Heart right ventricle (tissue), 16 donors: ENCODE measurements at regions of chr12 and their contacts with region 1.

Region 1: DNA sequence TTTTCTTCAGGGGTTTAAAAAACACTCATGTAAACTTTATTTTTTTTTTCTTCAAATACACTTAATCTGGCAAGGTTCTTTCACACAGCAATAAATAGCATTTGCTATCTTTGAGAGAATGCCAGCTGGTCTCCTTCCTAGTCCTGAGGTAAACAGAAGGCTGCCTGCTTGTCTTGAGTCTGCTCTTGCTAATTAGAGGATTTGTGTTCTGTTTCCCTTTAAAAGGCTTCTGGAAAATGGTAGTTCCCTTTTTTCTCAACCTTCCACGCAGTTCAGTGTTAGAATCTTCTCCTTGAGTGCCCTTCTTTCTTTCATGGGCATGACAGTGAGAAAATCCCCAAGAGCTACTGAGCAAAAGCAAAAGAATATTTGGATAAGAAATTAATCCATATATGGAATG is 92.3 kb upstream of the DCN start:
- DNase-seq: peak in 1 of 2 donors; percentile 41
- ATAC-seq: peak in 4 of 8 donors; percentile 43 to 58 (median 46)
- H3K4me3 ChIP-seq: no peak overlapping the region
- H3K27ac ChIP-seq: peak overlapping the region; percentile 25 to 85 (median 66)
- H3K4me1 ChIP-seq: peaks cover 0 to 42% (median 14%) of the 10 kb centered on the region in 9 donors
- H3K27me3 ChIP-seq: no peaks in the 10 kb centered on the region
- CTCF ChIP-seq: no peak

Region 2: DNA sequence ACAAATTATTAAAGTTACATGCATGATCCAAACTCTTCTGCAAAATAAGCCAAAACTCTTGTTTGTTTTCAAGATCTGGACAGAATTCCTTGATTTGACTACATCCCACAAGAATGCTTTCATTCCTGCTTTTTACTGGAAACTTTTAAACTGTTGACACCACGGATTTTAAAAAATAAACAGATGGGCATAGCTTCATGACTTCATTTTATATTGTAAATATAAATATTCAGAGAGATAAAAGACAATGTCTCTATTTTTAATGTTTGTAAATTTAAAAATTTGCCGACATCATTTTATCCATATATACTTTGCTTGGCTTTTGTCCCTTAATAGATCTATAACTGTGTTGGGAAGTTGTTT is 42.0 kb after region 1 on chr12:
- intact Hi-C with region 1: loop called in 1 of 10 experiments (anchors 5 kb)
- DNase-seq: no peak
- ATAC-seq: peak in 3 of 8 donors; percentile 14 to 42 (median 39)
- H3K4me3 ChIP-seq: no peak overlapping the region
- H3K27ac ChIP-seq: peak overlapping the region in 6 of 10 donors; percentile 18 to 67 (median 38)
- H3K4me1 ChIP-seq: peaks cover 0 to 10% (median 0%) of the 10 kb centered on the region in 9 donors
- H3K27me3 ChIP-seq: no peaks in the 10 kb centered on the region
- CTCF ChIP-seq: no peak

Region 3: DNA sequence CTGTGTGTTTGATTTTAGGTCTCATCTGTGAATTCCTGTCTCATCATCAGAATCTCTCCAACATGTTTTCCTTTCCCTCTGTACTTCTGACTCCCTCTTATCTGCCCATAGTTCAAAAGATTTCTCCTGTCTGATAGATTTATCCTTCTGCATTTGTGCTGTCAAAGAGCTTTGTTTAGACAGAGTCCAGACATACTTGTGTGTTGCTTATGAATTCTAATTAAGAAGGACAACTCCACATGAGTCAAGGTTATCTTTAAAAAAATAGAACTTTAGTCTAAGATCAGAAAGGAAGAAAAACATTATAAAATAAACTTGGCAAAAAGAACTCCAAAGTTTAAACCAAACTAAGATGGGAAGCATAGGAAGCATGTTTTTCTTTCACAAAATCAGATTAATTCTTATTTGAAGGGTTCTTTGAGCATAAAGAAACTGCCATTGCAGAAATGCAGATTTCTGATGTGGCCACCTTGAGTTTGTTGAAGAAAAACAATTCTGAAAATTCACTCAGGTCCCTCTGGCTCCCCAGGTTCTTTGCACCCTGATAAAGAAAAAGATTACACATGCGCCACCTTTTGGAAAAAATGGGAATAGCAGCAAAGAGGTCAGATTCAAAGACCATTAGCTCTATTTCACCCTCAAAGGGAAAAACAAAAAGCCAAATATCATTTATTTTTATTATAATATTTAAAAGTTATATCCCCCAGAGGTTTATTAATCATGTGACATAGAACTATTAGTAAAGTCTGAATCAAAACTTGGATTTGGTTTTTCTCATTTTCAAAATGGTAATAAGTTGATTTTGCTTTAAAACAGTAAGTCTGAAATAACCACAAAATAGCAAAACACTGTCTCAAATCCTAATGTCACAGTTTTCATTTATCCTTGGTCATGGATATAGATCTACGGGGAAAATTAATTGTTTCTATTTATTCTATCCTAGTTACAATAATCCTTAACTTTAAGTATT is 51.4 kb after region 1 on chr12:
- intact Hi-C with region 1: loop called in 1 of 10 experiments (anchors 5 kb)
- DNase-seq: peak in 1 of 2 donors; percentile 67
- ATAC-seq: peak in 5 of 8 donors; percentile 42 to 75 (median 69)
- H3K4me3 ChIP-seq: peak overlapping the region in 2 of 10 donors; percentile 14 to 18
- H3K27ac ChIP-seq: peak overlapping the region in 9 of 10 donors; percentile 4 to 73 (median 63)
- H3K4me1 ChIP-seq: peaks cover 0 to 6% (median 0%) of the 10 kb centered on the region in 9 donors
- H3K27me3 ChIP-seq: no peaks in the 10 kb centered on the region
- CTCF ChIP-seq: peak; percentile 61 to 86 (median 78)